H1 (cell line): ENCODE measurements at regions of chr3 and their contacts with region 1.

Region 1: DNA sequence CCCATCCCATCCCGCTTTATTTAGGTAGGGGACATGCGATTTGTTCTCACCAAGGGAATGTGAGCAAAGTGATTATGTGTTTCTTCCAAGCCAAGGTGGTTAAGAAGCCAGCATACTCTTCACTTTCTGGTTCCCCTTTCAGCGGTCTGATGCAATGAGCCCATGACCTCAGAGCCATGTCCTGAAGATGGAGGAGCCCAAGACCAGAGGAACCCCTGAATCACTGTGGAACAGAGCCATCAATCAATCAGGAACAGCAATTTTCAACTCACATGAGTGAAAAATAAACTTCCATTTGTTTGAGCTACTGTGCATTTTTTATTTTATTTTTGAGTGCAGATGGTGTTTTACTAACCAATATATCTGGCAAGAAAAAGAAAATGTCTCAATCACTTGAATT is 10.8 kb downstream of the THRB start:
- DNase-seq: no peak
- H3K4me3 ChIP-seq: no peak overlapping the region
- H3K27ac ChIP-seq: no peak overlapping the region
- H3K4me1 ChIP-seq: no peaks in the 10 kb centered on the region; a peak in 1 of 7 replicates
- H3K27me3 ChIP-seq: peaks cover 0 to 5% (median 0%) of the 10 kb centered on the region in 4 experiments; a peak in 3 of 7 replicates
- CTCF ChIP-seq: no peak
- EP300 ChIP-seq: no peak
- POLR2A ChIP-seq: no peak
- RAD21 ChIP-seq: no peak

Region 2: GRCh38 chr3:24220859-24221657 is 262.8 kb before region 1 on chr3:
- CTCF ChIA-PET with region 1: no interaction called
- POLR2A ChIA-PET with region 1: no interaction called
- DNase-seq: peak in 1 of 2 experiments; percentile 19
- H3K4me3 ChIP-seq: no peak overlapping the region
- H3K27ac ChIP-seq: no peak overlapping the region
- H3K4me1 ChIP-seq: peaks cover 0 to 8% (median 4%) of the 10 kb centered on the region in 4 experiments; a peak in 3 of 7 replicates
- H3K27me3 ChIP-seq: peaks cover 0 to 1% (median 0%) of the 10 kb centered on the region in 4 experiments; a peak in 1 of 7 replicates
- CTCF ChIP-seq: no peak
- EP300 ChIP-seq: no peak
- POLR2A ChIP-seq: no peak
- RAD21 ChIP-seq: no peak

Region 3: DNA sequence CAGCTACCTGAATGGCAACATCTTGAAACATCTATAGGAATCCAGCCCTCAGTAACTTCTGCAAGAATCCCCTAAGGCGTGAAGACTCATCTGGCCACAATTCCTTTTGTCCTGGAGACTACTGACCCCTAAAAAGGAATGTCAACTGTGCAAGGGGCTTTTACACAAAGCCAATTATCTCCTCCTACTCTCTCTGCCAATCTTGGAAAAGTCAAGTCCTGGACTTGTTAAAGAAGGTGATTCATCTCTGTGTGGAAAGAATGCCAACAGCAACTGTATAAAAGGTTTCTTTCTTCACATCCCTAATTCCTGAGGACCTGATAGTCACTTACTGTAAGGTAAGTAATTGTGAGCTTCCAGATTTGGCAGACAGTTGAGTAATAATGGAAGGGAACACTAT is 11.5 kb before region 1 on chr3:
- CTCF ChIA-PET with region 1: interaction called, 10 read pairs
- POLR2A ChIA-PET with region 1: no interaction called
- DNase-seq: no peak
- H3K4me3 ChIP-seq: no peak overlapping the region
- H3K27ac ChIP-seq: no peak overlapping the region
- H3K4me1 ChIP-seq: peaks cover 3 to 9% (median 4%) of the 10 kb centered on the region in 4 experiments; a peak in 6 of 7 replicates
- H3K27me3 ChIP-seq: no peaks in the 10 kb centered on the region; a peak in 2 of 7 replicates
- CTCF ChIP-seq: no peak
- EP300 ChIP-seq: no peak
- POLR2A ChIP-seq: no peak
- RAD21 ChIP-seq: no peak

Region 4: GRCh38 chr3:24494618-24495325 is 10.9 kb after region 1 on chr3 and contains the start of gene THRB:
- CTCF ChIA-PET with region 1: interaction called, 18 read pairs
- POLR2A ChIA-PET with region 1: interaction called, 4 read pairs
- DNase-seq: peak in 1 of 2 experiments; percentile 82
- H3K4me3 ChIP-seq: peak within 1 kb of the TSS; percentile 56 to 73 (median 69)
- H3K27ac ChIP-seq: no peak within 1 kb of the TSS
- H3K4me1 ChIP-seq: peaks cover 0 to 25% (median 11%) of the 10 kb centered on the region in 4 experiments; a peak in 6 of 7 replicates
- H3K27me3 ChIP-seq: peaks cover 0 to 15% (median 8%) of the 10 kb centered on the region in 4 experiments; a peak in 4 of 7 replicates
- CTCF ChIP-seq: peak in 2 of 3 experiments; percentile 8 to 25; a peak in 2 of 4 replicates
- EP300 ChIP-seq: no peak
- POLR2A ChIP-seq: no peak
- RAD21 ChIP-seq: peak in 1 of 2 experiments; percentile 7; a peak in 1 of 4 replicates
- total RNA-seq, gene THRB: 3.7 and 3.9 TPM in 2 replicates